ENCODE measurements at regions of chr3 and their contacts with region 1.

Region 1: GRCh38 chr3:104428337-104428925 is 938.3 kb upstream of the ALCAM start:
- DNase-seq: no peak
- H3K4me3 ChIP-seq: no peak overlapping the region
- H3K27ac ChIP-seq: no peak overlapping the region
- H3K4me1 ChIP-seq: no peaks in the 10 kb centered on the region
- H3K27me3 ChIP-seq: no peaks in the 10 kb centered on the region
- CTCF ChIP-seq: no peak

Region 2: GRCh38 chr3:103393395-103394186 is 1034.8 kb before region 1 on chr3:
- CTCF ChIA-PET with region 1: no interaction called
- POLR2A ChIA-PET with region 1: interaction called, 14 read pairs
- intact Hi-C with region 1: no loop called
- DNase-seq: no peak
- H3K4me3 ChIP-seq: no peak overlapping the region
- H3K27ac ChIP-seq: no peak overlapping the region
- H3K4me1 ChIP-seq: no peaks in the 10 kb centered on the region
- H3K27me3 ChIP-seq: no peaks in the 10 kb centered on the region
- CTCF ChIP-seq: no peak

Region 3: DNA sequence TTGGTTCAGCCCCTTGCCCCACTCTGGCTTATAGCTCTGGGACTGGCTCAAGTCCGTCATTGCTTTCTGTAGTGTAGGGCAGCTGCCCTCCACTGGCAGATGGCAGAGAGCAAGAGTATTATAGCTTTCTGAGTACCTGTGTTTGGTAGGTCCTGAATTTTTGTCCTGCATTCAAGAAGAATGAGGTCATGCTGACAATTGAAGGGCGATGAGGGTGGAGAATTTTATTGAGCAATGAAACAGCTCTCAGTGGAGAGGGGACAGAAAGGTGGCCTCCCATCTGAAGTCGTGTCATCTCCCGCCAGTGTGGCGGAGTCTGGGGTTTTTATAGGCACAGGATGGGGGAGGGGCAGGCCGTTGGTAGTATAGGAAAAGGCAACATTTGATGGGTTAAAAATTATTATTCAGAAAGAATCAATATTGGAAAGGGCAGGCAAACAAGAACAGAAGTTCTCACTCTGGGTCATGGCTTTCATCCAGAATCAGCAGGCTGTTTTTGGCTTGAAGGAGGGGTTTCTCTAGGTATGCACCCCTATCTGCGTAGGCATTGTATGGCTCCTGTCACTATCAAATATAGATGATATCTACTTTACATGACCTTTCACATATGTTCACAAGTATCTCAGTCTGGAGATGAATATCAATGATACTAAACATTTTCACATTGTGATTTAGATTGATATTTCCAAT is 301.4 kb before region 1 on chr3:
- CTCF ChIA-PET with region 1: no interaction called
- POLR2A ChIA-PET with region 1: no interaction called
- intact Hi-C with region 1: no loop called
- DNase-seq: no peak
- H3K4me3 ChIP-seq: no peak overlapping the region
- H3K27ac ChIP-seq: no peak overlapping the region
- H3K4me1 ChIP-seq: no peaks in the 10 kb centered on the region
- H3K27me3 ChIP-seq: no peaks in the 10 kb centered on the region
- CTCF ChIP-seq: no peak

Measured in A673 (cell line).